T-cell (primary cell): ENCODE measurements at regions of chr14 and their contacts with region 1.

Region 1: DNA sequence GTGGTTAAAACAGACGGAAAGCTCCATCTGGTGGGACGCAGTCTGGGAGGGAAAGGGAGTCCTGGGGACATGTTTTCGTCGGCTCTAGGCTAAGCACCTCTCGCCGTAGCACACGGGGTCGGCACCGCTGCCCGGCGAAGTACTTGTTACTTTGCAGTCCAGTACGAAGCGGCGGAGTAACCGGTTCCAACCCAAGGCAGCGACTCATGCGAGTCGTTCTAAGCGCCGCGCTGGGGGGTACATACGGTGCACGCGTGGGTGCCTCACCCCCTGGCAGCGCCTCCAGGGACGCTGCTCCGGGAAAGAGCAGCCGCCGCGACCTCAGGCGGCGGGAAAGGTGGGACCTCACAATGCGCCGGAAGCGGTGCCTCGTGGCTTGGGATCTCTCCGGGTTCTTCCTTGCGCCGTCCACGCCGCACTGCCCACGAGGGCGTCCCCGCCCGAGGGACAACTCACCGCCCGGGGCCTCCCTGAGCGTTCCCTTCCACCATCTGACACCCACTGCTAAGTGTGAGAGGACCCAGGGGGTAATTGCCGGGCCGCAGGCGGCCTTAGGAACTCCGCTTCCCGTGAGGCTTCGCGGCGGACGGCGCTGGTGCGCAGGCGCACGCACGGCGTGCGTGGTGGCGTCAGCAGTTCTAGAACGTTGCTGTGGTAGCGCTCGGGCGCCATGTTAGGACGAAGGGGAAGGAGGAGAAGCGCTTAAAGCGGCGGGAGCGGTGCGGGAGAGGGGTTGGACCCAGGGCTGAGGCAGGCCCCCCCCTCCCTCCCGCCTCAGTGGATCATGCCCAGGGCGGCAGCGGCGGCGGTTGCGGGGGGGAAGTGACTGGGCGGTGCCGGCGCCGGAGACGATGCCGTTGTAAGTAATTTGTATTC is at the start of gene PAPOLA:
- DNase-seq: peak; percentile 88 to 98 (median 94)
- ATAC-seq: peak; percentile 90 to 93 (median 92)
- H3K4me3 ChIP-seq: peak within 1 kb of the TSS; percentile 79 to 94
- H3K4me3 Mint-ChIP-seq: peak within 1 kb of the TSS; percentile 95 to 100 (median 98)
- H3K27ac ChIP-seq: peak within 1 kb of the TSS; percentile 94
- H3K27ac Mint-ChIP-seq: peak within 1 kb of the TSS; percentile 93
- H3K4me1 ChIP-seq: peaks cover 29 to 30% of the 10 kb centered on the region in 2 experiments
- H3K4me1 Mint-ChIP-seq: peaks cover 43 to 52% (median 49%) of the 10 kb centered on the region in 3 donors
- H3K27me3 ChIP-seq: peaks cover 0 to 3% of the 10 kb centered on the region in 2 experiments
- H3K27me3 Mint-ChIP-seq: peaks cover 0 to 3% of the 10 kb centered on the region in 2 donors
- total RNA-seq, gene PAPOLA: 168 to 207 (median 183) TPM

Region 2: GRCh38 chr14:96411555-96411954 is 90.4 kb before region 1 on chr14:
- CTCF ChIA-PET with region 1: no interaction called
- POLR2A ChIA-PET with region 1: interaction called in 1 of 2 experiments, 10 read pairs
- DNase-seq: no peak
- ATAC-seq: no peak
- H3K4me3 ChIP-seq: no peak overlapping the region
- H3K4me3 Mint-ChIP-seq: no peak overlapping the region
- H3K27ac ChIP-seq: no peak overlapping the region
- H3K27ac Mint-ChIP-seq: no peak overlapping the region
- H3K4me1 ChIP-seq: no peaks in the 10 kb centered on the region
- H3K4me1 Mint-ChIP-seq: no peaks in the 10 kb centered on the region
- H3K27me3 ChIP-seq: peaks cover 0 to 3% of the 10 kb centered on the region in 2 experiments
- H3K27me3 Mint-ChIP-seq: no peaks in the 10 kb centered on the region

Region 3: GRCh38 chr14:96470331-96470730 is 31.6 kb before region 1 on chr14:
- CTCF ChIA-PET with region 1: no interaction called
- POLR2A ChIA-PET with region 1: interaction called in 1 of 2 experiments, 10 read pairs
- DNase-seq: no peak
- ATAC-seq: no peak
- H3K4me3 ChIP-seq: no peak overlapping the region
- H3K4me3 Mint-ChIP-seq: no peak overlapping the region
- H3K27ac ChIP-seq: no peak overlapping the region
- H3K27ac Mint-ChIP-seq: no peak overlapping the region
- H3K4me1 ChIP-seq: no peaks in the 10 kb centered on the region
- H3K4me1 Mint-ChIP-seq: no peaks in the 10 kb centered on the region
- H3K27me3 ChIP-seq: peaks cover 0 to 7% of the 10 kb centered on the region in 2 experiments
- H3K27me3 Mint-ChIP-seq: peaks cover 3 to 8% of the 10 kb centered on the region in 2 donors